Calu3 (cell line): ENCODE measurements at regions of chr12 and their contacts with region 1.

Region 1: GRCh38 chr12:121917979-121918678 is at the start of gene CFAP251:
- DNase-seq: peak; percentile 97
- H3K4me3 Mint-ChIP-seq: peak within 1 kb of the TSS; percentile 80
- H3K27ac Mint-ChIP-seq: peak within 1 kb of the TSS; percentile 98
- H3K4me1 Mint-ChIP-seq: peaks cover 14% of the 10 kb centered on the region
- H3K27me3 Mint-ChIP-seq: no peaks in the 10 kb centered on the region
- CTCF ChIP-seq: peak; percentile 53
- total RNA-seq, gene CFAP251: 3.8 and 5.0 TPM in 2 replicates

Region 2: GRCh38 chr12:121697098-121697698 is 220.9 kb before region 1 on chr12:
- CTCF ChIA-PET with region 1: no interaction called
- intact Hi-C with region 1: no loop called
- DNase-seq: peak; percentile 57
- H3K4me3 Mint-ChIP-seq: no peak overlapping the region
- H3K27ac Mint-ChIP-seq: no peak overlapping the region
- H3K4me1 Mint-ChIP-seq: no peaks in the 10 kb centered on the region
- H3K27me3 Mint-ChIP-seq: no peaks in the 10 kb centered on the region
- CTCF ChIP-seq: peak; percentile 37

Region 3: GRCh38 chr12:121858662-121859572 is 59.2 kb before region 1 on chr12 and contains the start of gene HPD:
- CTCF ChIA-PET with region 1: no interaction called
- intact Hi-C with region 1: no loop called
- DNase-seq: no peak
- H3K4me3 Mint-ChIP-seq: no peak within 1 kb of the TSS
- H3K27ac Mint-ChIP-seq: no peak within 1 kb of the TSS
- H3K4me1 Mint-ChIP-seq: no peaks in the 10 kb centered on the region
- H3K27me3 Mint-ChIP-seq: peaks cover 22% of the 10 kb centered on the region
- CTCF ChIP-seq: no peak
- total RNA-seq, gene HPD: not detected in 2 replicates

Region 4: GRCh38 chr12:121888478-121889266 is 29.5 kb before region 1 on chr12 and contains the start of gene PSMD9:
- CTCF ChIA-PET with region 1: no interaction called
- intact Hi-C with region 1: no loop called
- DNase-seq: peak; percentile 99
- H3K4me3 Mint-ChIP-seq: peak within 1 kb of the TSS; percentile 95
- H3K27ac Mint-ChIP-seq: peak within 1 kb of the TSS; percentile 88
- H3K4me1 Mint-ChIP-seq: peaks cover 14% of the 10 kb centered on the region
- H3K27me3 Mint-ChIP-seq: no peaks in the 10 kb centered on the region
- CTCF ChIP-seq: peak; percentile 45
- total RNA-seq, gene PSMD9: 66.0 and 68.3 TPM in 2 replicates

Region 5: GRCh38 chr12:122021822-122022526 is 103.8 kb after region 1 on chr12 and contains the start of gene BCL7A:
- CTCF ChIA-PET with region 1: interaction called, 3 read pairs
- intact Hi-C with region 1: loop called (anchors 10 kb)
- DNase-seq: peak; percentile 69
- H3K4me3 Mint-ChIP-seq: peak within 1 kb of the TSS; percentile 96
- H3K27ac Mint-ChIP-seq: peak within 1 kb of the TSS; percentile 87
- H3K4me1 Mint-ChIP-seq: peaks cover 12% of the 10 kb centered on the region
- H3K27me3 Mint-ChIP-seq: no peaks in the 10 kb centered on the region
- CTCF ChIP-seq: no peak
- total RNA-seq, gene BCL7A: 21.0 and 25.5 TPM in 2 replicates

Region 6: DNA sequence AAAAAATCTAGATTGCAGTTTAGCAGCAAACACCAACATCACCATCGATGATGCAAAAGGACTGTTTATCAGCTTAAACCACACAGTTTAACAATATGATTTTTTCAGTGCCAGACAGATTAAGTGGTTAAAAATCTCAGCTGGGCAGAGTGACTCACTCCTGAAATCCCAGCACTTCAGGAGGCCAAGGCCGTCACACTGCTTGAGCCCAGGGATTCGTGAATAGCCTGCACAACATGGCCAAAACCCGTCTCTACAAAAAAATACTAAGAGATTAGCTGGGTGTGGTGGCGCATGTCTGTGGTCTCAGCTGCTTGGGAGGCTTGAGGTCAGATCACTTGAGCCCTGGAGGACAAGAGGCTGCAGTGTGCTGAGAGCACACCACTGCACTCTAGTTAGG is 599.7 kb after region 1 on chr12:
- CTCF ChIA-PET with region 1: no interaction called
- intact Hi-C with region 1: no loop called
- DNase-seq: no peak
- H3K4me3 Mint-ChIP-seq: no peak overlapping the region
- H3K27ac Mint-ChIP-seq: peak overlapping the region; percentile 67
- H3K4me1 Mint-ChIP-seq: peaks cover 18% of the 10 kb centered on the region
- H3K27me3 Mint-ChIP-seq: no peaks in the 10 kb centered on the region
- CTCF ChIP-seq: no peak